ENCODE measurements at regions of chr1 and their contacts with region 1.

Region 1: GRCh38 chr1:160777486-160778089 is 18.4 kb upstream of the LY9 start:
- DNase-seq: peak; percentile 69 to 75 (median 71)
- H3K4me3 ChIP-seq: no peak overlapping the region
- H3K4me3 Mint-ChIP-seq: no peak overlapping the region
- H3K27ac ChIP-seq: no peak overlapping the region
- H3K27ac Mint-ChIP-seq: peak overlapping the region in 3 of 7 donors; percentile 47 to 81 (median 58)
- H3K4me1 ChIP-seq: peaks cover 22% of the 10 kb centered on the region
- H3K4me1 Mint-ChIP-seq: peaks cover 17 to 25% (median 21%) of the 10 kb centered on the region in 4 donors
- H3K27me3 ChIP-seq: no peaks in the 10 kb centered on the region
- H3K27me3 Mint-ChIP-seq: peaks cover 0 to 2% of the 10 kb centered on the region in 2 donors

Region 2: GRCh38 chr1:160752924-160753323 is 24.7 kb before region 1 on chr1:
- CTCF ChIA-PET with region 1: no interaction called
- POLR2A ChIA-PET with region 1: no interaction called
- intact Hi-C with region 1: no loop called
- DNase-seq: no peak
- H3K4me3 ChIP-seq: no peak overlapping the region
- H3K4me3 Mint-ChIP-seq: no peak overlapping the region
- H3K27ac ChIP-seq: no peak overlapping the region
- H3K27ac Mint-ChIP-seq: peak overlapping the region in 1 of 7 donors; percentile 20
- H3K4me1 ChIP-seq: peaks cover 16% of the 10 kb centered on the region
- H3K4me1 Mint-ChIP-seq: peaks cover 6 to 47% (median 19%) of the 10 kb centered on the region in 4 donors
- H3K27me3 ChIP-seq: no peaks in the 10 kb centered on the region
- H3K27me3 Mint-ChIP-seq: peaks cover 2% of the 10 kb centered on the region in 2 donors

Region 3: DNA sequence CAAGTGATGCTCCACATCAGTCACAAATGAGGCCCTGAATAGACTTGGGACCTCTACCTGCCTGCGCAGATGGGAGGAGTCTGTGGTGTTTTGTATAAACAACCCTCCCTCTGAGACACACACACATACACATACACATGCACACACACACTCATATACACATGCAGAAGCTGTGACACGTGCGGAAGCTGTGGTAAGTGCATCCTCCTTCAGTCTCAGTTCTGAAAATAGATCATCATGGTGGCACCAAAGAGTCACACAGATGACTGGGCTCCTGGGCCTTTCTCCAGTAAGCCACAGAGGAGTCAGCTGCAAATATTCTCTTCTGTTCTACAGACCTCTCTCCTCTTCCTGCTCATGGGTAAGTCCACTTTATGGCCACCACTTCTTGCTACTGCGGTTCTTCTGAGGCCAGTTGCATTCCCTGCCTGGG is 18.4 kb after region 1 on chr1 and contains the start of gene LY9:
- CTCF ChIA-PET with region 1: interaction called, 144 read pairs
- POLR2A ChIA-PET with region 1: interaction called, 67 read pairs
- intact Hi-C with region 1: loop called (anchors 1 kb)
- DNase-seq: peak; percentile 90 to 96 (median 95)
- H3K4me3 ChIP-seq: peak within 1 kb of the TSS; percentile 49 to 78
- H3K4me3 Mint-ChIP-seq: peak within 1 kb of the TSS; percentile 97 to 99 (median 98)
- H3K27ac ChIP-seq: peak within 1 kb of the TSS; percentile 82
- H3K27ac Mint-ChIP-seq: peak within 1 kb of the TSS; percentile 90 to 98 (median 97)
- H3K4me1 ChIP-seq: peaks cover 45% of the 10 kb centered on the region
- H3K4me1 Mint-ChIP-seq: peaks cover 37 to 69% (median 48%) of the 10 kb centered on the region in 4 donors
- H3K27me3 ChIP-seq: no peaks in the 10 kb centered on the region
- H3K27me3 Mint-ChIP-seq: no peaks in the 10 kb centered on the region
- total RNA-seq, gene LY9: 131 to 136 TPM

Region 4: GRCh38 chr1:160821628-160822027 is 44.0 kb after region 1 on chr1:
- CTCF ChIA-PET with region 1: interaction called, 13 read pairs
- POLR2A ChIA-PET with region 1: no interaction called
- intact Hi-C with region 1: no loop called
- DNase-seq: no peak
- H3K4me3 ChIP-seq: no peak overlapping the region
- H3K4me3 Mint-ChIP-seq: no peak overlapping the region
- H3K27ac ChIP-seq: no peak overlapping the region
- H3K27ac Mint-ChIP-seq: peak overlapping the region in 5 of 7 donors; percentile 10 to 71 (median 47)
- H3K4me1 ChIP-seq: no peaks in the 10 kb centered on the region
- H3K4me1 Mint-ChIP-seq: peaks cover 0 to 6% (median 3%) of the 10 kb centered on the region in 4 donors
- H3K27me3 ChIP-seq: no peaks in the 10 kb centered on the region
- H3K27me3 Mint-ChIP-seq: no peaks in the 10 kb centered on the region

Region 5: DNA sequence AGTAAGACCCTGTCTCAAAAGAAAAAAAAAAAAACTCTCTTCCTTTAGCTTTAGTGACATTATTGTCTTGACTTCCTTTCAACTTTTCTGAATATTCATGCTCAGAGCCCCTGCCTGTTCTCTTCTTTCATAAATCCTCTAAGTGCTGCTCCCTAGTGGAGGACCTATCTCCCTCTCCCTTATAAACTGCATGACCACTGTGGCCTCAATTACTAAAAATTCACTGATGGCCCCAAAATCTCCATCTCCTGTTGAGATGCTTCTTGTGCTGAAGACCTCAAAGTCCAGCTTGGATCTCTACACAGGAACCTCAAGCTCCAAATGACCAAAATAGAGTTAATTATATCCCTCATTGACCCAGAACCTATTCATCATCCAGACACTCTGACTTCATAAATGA is 99.6 kb after region 1 on chr1:
- CTCF ChIA-PET with region 1: interaction called, 8 read pairs
- POLR2A ChIA-PET with region 1: no interaction called
- intact Hi-C with region 1: loop called (anchors 2 kb)
- DNase-seq: peak in 4 of 5 donors; percentile 45 to 56 (median 54)
- H3K4me3 ChIP-seq: no peak overlapping the region
- H3K4me3 Mint-ChIP-seq: peak overlapping the region in 1 of 8 donors; percentile 15
- H3K27ac ChIP-seq: no peak overlapping the region
- H3K27ac Mint-ChIP-seq: peak overlapping the region in 2 of 7 donors; percentile 1 to 2
- H3K4me1 ChIP-seq: peaks cover 7% of the 10 kb centered on the region
- H3K4me1 Mint-ChIP-seq: peaks cover 5 to 22% (median 6%) of the 10 kb centered on the region in 4 donors
- H3K27me3 ChIP-seq: no peaks in the 10 kb centered on the region
- H3K27me3 Mint-ChIP-seq: peaks cover 0 to 6% of the 10 kb centered on the region in 2 donors

Measured in CD4-positive, alpha-beta memory T cell (primary cell).